ENCODE measurements at regions of chr2 and their contacts with region 1.

Region 1: DNA sequence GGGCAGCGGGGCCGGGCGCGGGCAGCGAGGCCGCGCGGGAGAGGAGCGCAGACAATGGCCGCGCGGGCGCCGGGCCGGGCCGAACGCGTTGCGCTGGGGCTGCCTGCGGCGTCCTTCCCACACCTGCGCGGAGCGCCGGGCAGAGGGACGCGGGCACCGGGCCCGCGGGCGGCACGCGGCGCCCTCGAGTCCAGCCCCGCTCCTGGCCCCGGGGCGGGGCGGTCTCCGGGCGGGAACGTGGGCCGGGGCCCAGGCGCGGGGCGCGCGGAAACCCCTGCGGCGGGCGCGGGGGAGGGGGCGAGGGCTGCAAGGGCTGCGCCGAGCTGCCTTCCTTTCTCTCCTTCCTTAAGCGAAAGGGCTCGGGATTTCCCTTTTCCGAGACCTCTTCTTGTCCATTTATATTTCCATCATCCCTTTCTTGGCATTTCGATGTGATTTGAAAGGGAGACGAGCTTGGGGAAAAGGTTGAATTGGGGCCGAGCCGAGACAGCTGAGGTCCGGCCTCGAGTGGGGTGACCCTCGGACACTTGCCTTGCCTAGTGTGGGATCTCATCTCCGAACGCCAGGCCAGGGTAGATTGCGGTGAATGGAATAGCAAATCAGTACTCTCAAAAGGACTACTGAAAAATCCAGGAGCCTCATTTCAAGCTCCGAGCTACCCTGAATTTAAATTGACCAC is 676 bp downstream of the KLHL23 start:
- DNase-seq: no peak
- H3K4me3 ChIP-seq: peak overlapping the region; percentile 48 to 75 (median 72)
- H3K27ac ChIP-seq: peak overlapping the region; percentile 77 to 86 (median 80)
- H3K4me1 ChIP-seq: peaks cover 0 to 47% (median 33%) of the 10 kb centered on the region in 4 donors
- H3K27me3 ChIP-seq: no peaks in the 10 kb centered on the region
- CTCF ChIP-seq: no peak
- EP300 ChIP-seq: no peak
- POLR2A ChIP-seq: no peak

Region 2: DNA sequence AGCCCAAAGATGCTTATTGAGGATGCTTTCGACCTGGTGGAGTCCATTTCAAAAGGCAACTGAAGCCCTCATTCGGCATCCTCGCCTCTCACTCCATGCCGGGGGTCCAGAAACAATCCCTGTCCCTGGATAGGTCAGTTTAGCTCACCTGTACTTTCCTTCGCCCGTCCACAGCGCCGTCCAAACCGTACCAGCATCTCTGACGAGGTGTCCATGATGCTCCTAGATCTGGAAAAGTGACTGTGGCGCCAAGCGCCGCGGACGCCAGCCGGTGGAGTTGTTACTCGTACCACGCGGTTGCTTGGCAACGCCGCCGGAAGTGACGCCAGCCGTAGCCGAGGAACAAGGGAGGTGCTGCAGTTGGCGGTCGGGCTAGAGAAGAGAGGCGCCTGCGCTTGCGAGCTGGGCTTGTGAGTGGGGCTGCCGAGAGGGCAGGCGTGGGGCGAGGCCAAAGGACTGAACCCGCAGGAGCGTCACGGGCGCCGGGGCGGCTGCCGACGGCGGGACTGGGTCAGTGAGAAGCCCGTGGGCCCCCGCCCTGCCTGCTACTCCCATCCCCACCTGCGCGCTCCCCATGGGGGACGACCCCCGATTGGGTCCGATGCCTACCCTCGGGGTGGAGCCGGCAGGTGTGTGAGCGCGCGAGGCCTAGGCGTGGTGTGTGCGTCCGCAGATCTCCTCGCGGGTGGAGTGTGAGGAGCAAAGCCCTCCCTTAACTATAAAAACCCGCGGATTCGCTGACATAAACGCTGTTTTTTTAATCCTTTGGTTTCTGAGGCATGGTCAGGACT is 40.0 kb before region 1 on chr2 and contains the starts of genes CFAP210 and PHOSPHO2:
- intact Hi-C with region 1: loop called (anchors 5 kb)
- DNase-seq: peak; percentile 100
- H3K4me3 ChIP-seq: peak within 1 kb of the TSS; percentile 81 to 89 (median 84)
- H3K27ac ChIP-seq: peak within 1 kb of the TSS; percentile 87 to 89 (median 88)
- H3K4me1 ChIP-seq: peaks cover 0 to 21% (median 13%) of the 10 kb centered on the region in 4 donors
- H3K27me3 ChIP-seq: no peaks in the 10 kb centered on the region
- CTCF ChIP-seq: peak in 1 of 4 experiments; percentile 9
- EP300 ChIP-seq: peak in 1 of 4 donors; percentile 32
- POLR2A ChIP-seq: peak; percentile 67 to 75
- total RNA-seq, gene CFAP210: not detected
- total RNA-seq, gene PHOSPHO2: 5.8 to 19.9 (median 14.3) TPM

Region 3: DNA sequence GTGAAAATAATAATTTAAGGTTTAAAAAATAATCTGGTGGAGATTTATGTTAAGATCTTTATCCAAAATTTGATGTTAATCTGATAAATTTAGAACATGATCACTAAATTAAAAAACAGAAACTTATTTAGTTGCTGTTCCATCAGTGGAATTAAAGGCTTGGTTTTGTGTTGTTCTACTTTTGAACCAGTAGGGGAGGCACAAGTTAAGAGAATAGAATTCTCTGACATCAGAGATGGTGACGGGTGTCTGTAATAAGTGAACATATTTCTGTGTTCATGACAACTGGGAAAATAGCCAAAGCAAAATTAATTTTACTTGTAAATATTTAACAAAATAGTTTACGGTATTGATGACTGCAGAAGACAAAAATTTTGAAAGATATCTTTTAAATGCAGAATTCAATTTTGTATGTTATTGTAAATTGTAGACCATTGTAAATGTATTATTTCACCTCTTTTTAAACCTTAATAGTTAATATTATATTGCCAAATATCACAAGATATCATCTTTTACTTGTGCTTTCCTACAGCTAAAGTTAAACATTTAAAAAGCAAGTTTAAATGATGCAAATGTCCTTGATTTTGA is 198.9 kb after region 1 on chr2:
- intact Hi-C with region 1: no loop called
- DNase-seq: no peak
- H3K4me3 ChIP-seq: no peak overlapping the region
- H3K27ac ChIP-seq: no peak overlapping the region
- H3K4me1 ChIP-seq: no peaks in the 10 kb centered on the region
- H3K27me3 ChIP-seq: no peaks in the 10 kb centered on the region
- CTCF ChIP-seq: peak in 3 of 4 experiments; percentile 43 to 65 (median 47)
- EP300 ChIP-seq: no peak
- POLR2A ChIP-seq: no peak

Measured in sigmoid colon (tissue), 7 donors.